SK-N-SH (cell line): ENCODE measurements at regions of chr19 and their contacts with region 1.

Region 1: DNA sequence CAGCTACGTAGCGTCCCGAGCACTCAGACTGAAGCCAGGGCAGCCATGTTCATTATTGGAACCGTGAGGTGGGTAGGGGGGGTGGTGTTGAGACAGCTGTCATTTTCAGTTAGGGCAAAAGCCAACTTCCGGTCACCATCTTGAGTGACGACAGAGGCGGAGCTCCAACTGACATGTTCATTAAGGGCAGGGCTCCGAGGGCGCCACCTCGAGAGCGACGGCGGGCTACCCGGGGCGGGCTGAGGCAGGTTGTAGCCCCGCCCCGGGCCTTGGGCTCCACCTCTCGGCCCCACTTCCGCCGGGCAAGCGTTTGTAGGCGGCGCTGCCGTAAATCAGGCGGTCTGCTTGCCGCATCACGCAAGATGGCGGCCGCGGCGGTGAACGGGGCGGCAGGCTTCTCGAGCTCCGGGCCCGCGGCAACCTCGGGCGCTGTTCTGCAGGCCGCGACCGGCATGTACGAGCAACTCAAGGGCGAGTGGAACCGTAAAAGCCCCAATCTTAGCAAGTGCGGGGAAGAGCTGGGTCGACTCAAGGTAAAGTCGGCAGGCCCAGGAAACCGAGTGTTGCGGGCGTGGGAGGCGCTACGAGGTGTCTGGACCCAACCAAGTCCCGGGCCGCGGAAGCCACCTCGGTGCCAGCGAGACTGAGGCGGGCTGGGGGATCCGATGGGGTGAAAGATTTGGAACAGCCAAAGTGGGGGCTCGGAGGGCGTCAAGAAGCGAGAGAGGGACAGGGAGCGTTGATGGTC is at the start of gene PSMD8:
- DNase-seq: peak; percentile 98
- H3K4me3 ChIP-seq: peak within 1 kb of the TSS; percentile 68 to 91
- H3K27ac ChIP-seq: peak within 1 kb of the TSS; percentile 82 to 87
- H3K4me1 ChIP-seq: peaks cover 6 to 14% of the 10 kb centered on the region in 2 experiments; a peak in 3 of 4 replicates
- H3K27me3 ChIP-seq: no peaks in the 10 kb centered on the region
- CTCF ChIP-seq: peak; percentile 22; the same call in 1 of the 2 replicates
- EP300 ChIP-seq: no peak
- RAD21 ChIP-seq: no peak
- polyA plus RNA-seq, gene PSMD8: 400 and 453 TPM in 2 replicates

Region 2: DNA sequence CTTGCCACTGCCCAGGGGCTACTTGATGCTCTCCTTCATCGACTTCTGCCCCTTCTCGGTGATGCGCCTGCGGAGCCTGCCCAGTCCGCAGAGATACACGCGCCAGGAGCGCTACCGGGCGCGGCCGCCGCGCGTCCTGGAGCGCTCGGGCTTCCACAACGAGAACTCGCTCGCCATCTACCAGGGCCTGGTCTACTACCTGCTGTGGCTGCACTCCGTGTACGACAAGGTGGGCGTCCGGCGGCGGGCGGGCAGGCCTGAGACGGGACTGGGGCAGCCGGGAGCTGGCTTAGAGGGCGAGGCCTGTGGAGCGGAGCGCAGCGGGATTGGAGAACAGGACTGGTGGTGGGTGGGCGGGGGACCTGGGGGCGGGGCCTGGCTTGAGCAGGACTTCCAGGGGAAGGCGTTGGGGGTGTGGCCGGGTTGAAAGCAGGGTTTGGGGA is 12.9 kb before region 1 on chr19:
- CTCF ChIA-PET with region 1: interaction called, 3 read pairs
- POLR2A ChIA-PET with region 1: interaction called, 17 read pairs
- DNase-seq: peak; percentile 97
- H3K4me3 ChIP-seq: peak overlapping the region; percentile 58 to 89
- H3K27ac ChIP-seq: peak overlapping the region in 1 of 2 experiments; percentile 85; a peak in 1 of 4 replicates
- H3K4me1 ChIP-seq: peaks cover 0 to 10% of the 10 kb centered on the region in 2 experiments; a peak in 1 of 4 replicates
- H3K27me3 ChIP-seq: peaks cover 36% of the 10 kb centered on the region
- CTCF ChIP-seq: peak; percentile 16; the same call in 1 of the 2 replicates
- EP300 ChIP-seq: no peak
- RAD21 ChIP-seq: no peak

Region 3: GRCh38 chr19:38387550-38388348 is 13.1 kb after region 1 on chr19 and contains the start of gene GGN:
- CTCF ChIA-PET with region 1: interaction called, 8 read pairs
- POLR2A ChIA-PET with region 1: interaction called, 29 read pairs
- DNase-seq: peak; percentile 95
- H3K4me3 ChIP-seq: peak within 1 kb of the TSS; percentile 84 to 99
- H3K27ac ChIP-seq: peak within 1 kb of the TSS; percentile 88 to 95
- H3K4me1 ChIP-seq: peaks cover 9 to 13% of the 10 kb centered on the region in 2 experiments; a peak in 2 of 4 replicates
- H3K27me3 ChIP-seq: no peaks in the 10 kb centered on the region
- CTCF ChIP-seq: no peak
- EP300 ChIP-seq: no peak
- RAD21 ChIP-seq: no peak
- polyA plus RNA-seq, gene GGN: 0.48 and 0.52 TPM in 2 replicates

Region 4: GRCh38 chr19:38483016-38483630 is 108.5 kb after region 1 on chr19:
- CTCF ChIA-PET with region 1: no interaction called
- POLR2A ChIA-PET with region 1: no interaction called
- DNase-seq: peak; percentile 55
- H3K4me3 ChIP-seq: no peak overlapping the region
- H3K27ac ChIP-seq: no peak overlapping the region
- H3K4me1 ChIP-seq: no peaks in the 10 kb centered on the region
- H3K27me3 ChIP-seq: peaks cover 65% of the 10 kb centered on the region
- CTCF ChIP-seq: no peak
- EP300 ChIP-seq: no peak
- RAD21 ChIP-seq: no peak